Gastrocnemius medialis (tissue), 4 donors: ENCODE measurements at regions of chr5 and their contacts with region 1.

Region 1: DNA sequence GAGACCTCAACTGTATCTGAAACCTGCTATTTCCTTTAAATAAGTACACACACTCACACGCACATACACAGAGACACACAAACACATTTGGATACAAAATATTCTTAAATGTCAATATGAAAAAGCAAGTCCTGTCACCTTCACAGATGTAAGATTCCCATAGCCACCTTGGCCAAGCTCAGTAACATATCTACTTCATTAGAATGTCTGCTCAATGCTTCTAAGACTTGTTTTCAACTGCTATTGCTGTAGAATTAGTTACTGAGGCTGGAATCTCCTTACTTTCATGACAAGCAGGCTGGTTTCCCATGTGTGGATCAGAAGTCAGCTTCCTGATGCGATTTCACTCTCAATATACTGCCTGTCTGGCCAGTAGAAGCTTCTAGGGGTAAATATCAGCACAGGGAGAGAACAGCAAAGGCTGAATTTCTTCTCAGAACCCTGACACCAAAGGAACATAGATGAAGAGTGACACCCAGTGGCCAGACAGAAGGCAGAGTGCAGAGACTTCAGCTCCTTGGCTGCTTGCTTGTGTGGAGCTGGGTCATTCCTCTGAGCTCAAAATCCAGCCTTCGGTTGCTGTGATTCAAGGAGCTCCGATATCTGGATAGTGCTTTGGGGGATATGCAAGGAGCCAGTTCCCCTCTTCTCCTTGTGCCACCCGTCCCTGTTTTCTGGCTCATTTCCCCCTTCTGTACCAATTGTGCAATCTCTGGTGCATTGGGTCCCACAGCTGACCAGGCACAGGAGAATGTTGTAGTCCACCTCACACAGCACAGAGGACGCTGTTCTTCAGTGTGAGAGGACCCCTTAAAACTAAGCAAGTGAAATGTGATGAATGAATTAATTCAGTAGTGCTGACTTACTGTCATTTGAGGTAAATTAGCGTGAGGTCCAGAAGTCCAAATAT is 26.6 kb upstream of the ABLIM3 start:
- DNase-seq: peak; percentile 38 to 55
- ATAC-seq: peak; percentile 75 to 96
- H3K4me3 ChIP-seq: no peak overlapping the region
- H3K27ac ChIP-seq: peak overlapping the region in 2 of 4 donors; percentile 51 to 54
- H3K4me1 ChIP-seq: peaks cover 0 to 4% of the 10 kb centered on the region in 2 donors
- H3K27me3 ChIP-seq: no peaks in the 10 kb centered on the region
- CTCF ChIP-seq: peak; percentile 51 to 82 (median 68)
- POLR2A ChIP-seq: no peak

Region 2: GRCh38 chr5:148179234-148179824 is 935.3 kb before region 1 on chr5:
- in situ Hi-C with region 1: loop called in 1 of 4 experiments (anchors 25 kb)
- intact Hi-C with region 1: no loop called
- DNase-seq: no peak
- ATAC-seq: peak; percentile 41 to 52
- H3K4me3 ChIP-seq: no peak overlapping the region
- H3K27ac ChIP-seq: no peak overlapping the region
- H3K4me1 ChIP-seq: no peaks in the 10 kb centered on the region
- H3K27me3 ChIP-seq: no peaks in the 10 kb centered on the region
- CTCF ChIP-seq: peak in 4 of 5 experiments; percentile 34 to 56 (median 44)
- POLR2A ChIP-seq: no peak

Region 3: GRCh38 chr5:148437249-148437648 is 677.4 kb before region 1 on chr5:
- in situ Hi-C with region 1: loop called in 3 of 4 experiments (anchors 10 to 25 kb)
- intact Hi-C with region 1: no loop called
- DNase-seq: no peak
- ATAC-seq: no peak
- H3K4me3 ChIP-seq: no peak overlapping the region
- H3K27ac ChIP-seq: no peak overlapping the region
- H3K4me1 ChIP-seq: no peaks in the 10 kb centered on the region
- H3K27me3 ChIP-seq: no peaks in the 10 kb centered on the region
- CTCF ChIP-seq: no peak
- POLR2A ChIP-seq: no peak

Region 4: DNA sequence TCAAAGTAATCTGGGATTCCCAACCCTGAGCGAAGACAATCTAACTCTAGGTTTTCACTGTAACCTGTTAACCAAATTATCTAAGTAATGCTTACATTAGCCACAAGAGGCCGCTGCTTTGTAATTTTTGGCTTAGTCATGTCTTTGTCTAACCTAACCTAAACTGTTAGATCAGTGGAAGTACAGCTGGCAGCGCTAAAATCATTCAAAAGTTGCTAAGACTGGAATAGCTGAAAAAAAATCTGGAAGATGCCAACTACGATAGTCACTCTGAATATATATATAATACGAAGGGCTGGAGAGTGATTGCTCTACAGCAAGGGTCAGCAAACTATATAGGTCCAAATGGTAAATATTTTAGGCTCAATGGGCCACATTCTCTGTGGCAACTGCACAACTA is 670.7 kb before region 1 on chr5:
- in situ Hi-C with region 1: loop called in 3 of 4 experiments (anchors 10 to 25 kb)
- intact Hi-C with region 1: loop called (anchors 1 kb)
- DNase-seq: peak in 1 of 2 donors; percentile 7
- ATAC-seq: peak; percentile 83 to 91
- H3K4me3 ChIP-seq: no peak overlapping the region
- H3K27ac ChIP-seq: no peak overlapping the region
- H3K4me1 ChIP-seq: no peaks in the 10 kb centered on the region
- H3K27me3 ChIP-seq: no peaks in the 10 kb centered on the region
- CTCF ChIP-seq: peak; percentile 57 to 77 (median 72)
- POLR2A ChIP-seq: no peak

Region 5: DNA sequence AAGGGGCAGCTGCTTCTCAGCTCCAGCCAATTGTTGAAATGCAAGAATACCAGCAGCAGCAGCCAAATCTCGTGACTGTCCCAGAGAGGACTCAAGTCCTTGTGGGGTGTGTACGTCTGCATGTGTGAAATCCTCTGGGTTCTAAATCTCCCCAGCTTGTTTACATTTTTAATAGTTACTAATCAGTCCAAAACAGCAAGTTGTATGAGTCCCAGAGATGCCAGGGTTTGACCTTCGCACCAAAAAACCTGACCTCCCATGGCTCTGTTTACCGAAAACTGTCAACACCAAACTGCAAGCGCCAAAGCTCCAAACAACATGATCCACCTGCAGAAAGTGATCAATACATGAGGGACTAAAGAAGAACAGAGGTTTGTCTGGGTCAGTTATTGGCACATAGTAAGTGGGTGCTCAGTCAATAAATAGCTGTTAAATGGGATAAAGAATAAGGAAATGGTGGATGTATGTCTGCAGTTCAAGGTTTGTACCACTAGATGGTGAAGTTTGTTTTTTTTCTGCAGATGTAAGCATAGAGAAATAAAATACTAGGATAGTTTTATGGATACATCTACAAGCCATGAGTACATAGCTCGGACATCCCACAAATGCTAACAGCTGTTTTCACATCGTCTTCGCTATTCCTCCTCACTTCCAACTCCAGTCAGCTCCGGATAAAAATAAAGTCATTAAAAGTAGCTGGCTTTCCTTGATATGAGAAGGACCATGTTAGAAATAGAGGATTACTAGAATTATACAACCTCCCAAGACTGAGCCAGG is 373.5 kb before region 1 on chr5:
- in situ Hi-C with region 1: loop called in 3 of 4 experiments (anchors 5 kb)
- intact Hi-C with region 1: no loop called
- DNase-seq: peak; percentile 73 to 77
- ATAC-seq: peak; percentile 95 to 97
- H3K4me3 ChIP-seq: peak overlapping the region in 3 of 4 donors; percentile 14 to 21 (median 15)
- H3K27ac ChIP-seq: peak overlapping the region; percentile 65 to 77 (median 73)
- H3K4me1 ChIP-seq: peaks cover 9 to 20% of the 10 kb centered on the region in 2 donors
- H3K27me3 ChIP-seq: no peaks in the 10 kb centered on the region
- CTCF ChIP-seq: peak; percentile 81 to 85 (median 83)
- POLR2A ChIP-seq: no peak

Region 6: GRCh38 chr5:148904440-148904839 is 210.2 kb before region 1 on chr5:
- in situ Hi-C with region 1: no loop called
- intact Hi-C with region 1: loop called (anchors 10 kb)
- DNase-seq: peak; percentile 68 to 81
- ATAC-seq: peak; percentile 84 to 94
- H3K4me3 ChIP-seq: no peak overlapping the region
- H3K27ac ChIP-seq: peak overlapping the region; percentile 59 to 82 (median 71)
- H3K4me1 ChIP-seq: peaks cover 15 to 63% of the 10 kb centered on the region in 2 donors
- H3K27me3 ChIP-seq: no peaks in the 10 kb centered on the region
- CTCF ChIP-seq: no peak
- POLR2A ChIP-seq: no peak

Region 7: DNA sequence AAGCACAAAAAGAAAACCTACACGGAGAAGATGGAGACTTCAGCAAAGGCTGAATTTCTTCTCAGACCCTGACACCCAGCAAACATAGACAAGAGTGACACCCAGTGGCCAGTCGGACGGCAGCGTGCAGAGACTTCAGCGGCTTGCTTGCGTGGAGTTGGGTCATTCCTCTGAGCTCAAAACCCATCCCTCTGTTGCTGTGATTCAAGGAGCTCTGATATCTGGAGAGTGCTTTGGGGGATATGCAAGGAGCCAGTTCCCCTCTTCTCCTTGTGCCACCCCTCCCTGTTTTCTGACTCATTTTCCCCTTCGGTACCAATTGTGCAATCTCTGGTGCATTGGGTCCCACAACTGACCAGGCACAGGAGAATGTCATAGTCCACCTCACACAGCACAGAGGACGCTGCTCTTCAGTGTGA is 79.3 kb before region 1 on chr5:
- in situ Hi-C with region 1: no loop called
- intact Hi-C with region 1: loop called (anchors 10 kb)
- DNase-seq: peak; percentile 38 to 64
- ATAC-seq: peak; percentile 73 to 88
- H3K4me3 ChIP-seq: no peak overlapping the region
- H3K27ac ChIP-seq: no peak overlapping the region
- H3K4me1 ChIP-seq: peaks cover 0 to 9% of the 10 kb centered on the region in 2 donors
- H3K27me3 ChIP-seq: no peaks in the 10 kb centered on the region
- CTCF ChIP-seq: peak; percentile 76 to 92 (median 81)
- POLR2A ChIP-seq: no peak